ENCODE measurements at regions of chr13 and their contacts with region 1.

Region 1: GRCh38 chr13:19863323-19864023 is at the start of gene ZMYM5:
- DNase-seq: peak; percentile 98 to 100
- H3K4me3 ChIP-seq: peak within 1 kb of the TSS; percentile 96 to 97
- H3K27ac ChIP-seq: peak within 1 kb of the TSS; percentile 98 to 99
- H3K4me1 ChIP-seq: peaks cover 0 to 29% (median 19%) of the 10 kb centered on the region in 4 donors
- H3K27me3 ChIP-seq: no peaks in the 10 kb centered on the region
- CTCF ChIP-seq: peak in 1 of 2 experiments; percentile 7

Region 2: DNA sequence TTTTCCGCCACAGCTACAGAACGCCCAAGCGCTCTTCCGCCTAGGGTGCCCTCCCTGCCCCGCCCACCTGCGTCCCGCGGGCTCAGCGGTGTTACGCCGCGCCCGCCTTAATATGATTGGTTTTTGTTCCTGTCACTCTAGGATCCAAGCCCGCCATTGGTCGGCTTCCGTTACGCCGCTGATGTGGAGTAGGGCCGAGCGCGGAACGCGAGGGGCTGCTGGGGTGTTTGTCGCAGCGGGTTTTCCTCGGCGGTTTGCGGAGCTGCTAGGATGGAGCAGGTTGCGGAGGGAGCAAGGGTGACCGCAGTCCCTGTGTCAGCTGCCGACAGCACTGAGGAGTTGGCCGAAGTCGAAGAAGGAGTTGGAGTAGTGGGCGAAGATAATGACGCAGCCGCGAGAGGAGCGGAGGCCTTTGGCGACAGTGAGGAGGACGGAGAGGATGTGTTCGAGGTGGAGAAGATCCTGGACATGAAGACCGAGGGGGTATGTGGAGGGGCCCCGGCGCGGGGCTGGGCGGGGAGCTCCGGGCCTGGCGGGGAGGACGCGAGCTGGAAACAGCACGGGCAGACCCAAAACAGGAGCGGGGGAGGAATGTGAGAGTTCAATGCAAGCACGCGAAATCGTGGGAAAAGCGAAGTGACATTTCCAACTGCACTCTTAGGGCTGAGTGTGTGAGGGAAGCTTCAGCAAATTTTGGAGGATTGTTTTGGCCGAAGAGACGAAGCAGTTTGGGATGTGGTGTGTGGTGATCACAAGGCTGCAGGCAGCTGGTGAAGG is 229.8 kb before region 1 on chr13 and contains the start of gene MPHOSPH8:
- intact Hi-C with region 1: loop called (anchors 2 kb)
- DNase-seq: peak; percentile 94 to 97
- H3K4me3 ChIP-seq: peak within 1 kb of the TSS; percentile 78 to 80
- H3K27ac ChIP-seq: peak within 1 kb of the TSS; percentile 92 to 94
- H3K4me1 ChIP-seq: peaks cover 0 to 31% (median 23%) of the 10 kb centered on the region in 4 donors
- H3K27me3 ChIP-seq: no peaks in the 10 kb centered on the region
- CTCF ChIP-seq: no peak

Region 3: DNA sequence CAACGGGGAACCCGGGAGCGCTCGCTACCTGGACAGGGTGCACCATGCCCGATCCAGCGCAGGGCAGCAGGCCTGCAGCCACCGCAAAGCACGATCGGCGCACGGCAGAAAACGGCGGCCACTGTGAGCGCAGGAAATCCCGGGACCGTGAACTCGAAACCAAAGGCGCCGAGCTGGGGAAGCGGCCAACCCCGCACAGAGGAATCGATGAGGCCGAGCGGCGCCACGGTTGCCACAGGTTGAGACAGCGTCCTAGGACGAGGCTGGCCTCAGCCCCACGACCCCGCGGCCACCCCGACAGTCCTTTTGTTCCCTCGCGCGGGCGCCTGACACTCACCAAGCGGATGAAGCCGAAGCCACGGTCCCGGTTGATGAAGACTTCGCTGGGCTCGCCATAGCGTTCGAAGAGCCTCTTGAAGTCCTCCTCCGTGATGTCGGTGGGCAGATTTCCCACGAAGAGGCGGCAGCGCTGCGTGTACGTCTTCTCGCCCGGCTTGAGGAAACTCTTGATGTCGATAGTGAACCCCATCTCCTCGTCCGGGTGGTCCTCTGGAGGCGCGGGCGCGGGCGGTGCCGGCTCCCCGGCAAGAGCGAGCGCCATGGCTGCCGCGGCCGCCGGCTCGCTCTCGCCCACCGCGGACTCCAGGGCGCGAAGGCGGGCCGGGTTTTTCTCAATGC is 81.3 kb before region 1 on chr13:
- intact Hi-C with region 1: loop called (anchors 2 kb)
- DNase-seq: peak; percentile 50 to 75
- H3K4me3 ChIP-seq: peak overlapping the region; percentile 87 to 95
- H3K27ac ChIP-seq: peak overlapping the region; percentile 97
- H3K4me1 ChIP-seq: peaks cover 0 to 13% (median 4%) of the 10 kb centered on the region in 4 donors
- H3K27me3 ChIP-seq: no peaks in the 10 kb centered on the region
- CTCF ChIP-seq: no peak

Region 4: GRCh38 chr13:19959831-19960652 is 96.6 kb after region 1 on chr13:
- intact Hi-C with region 1: loop called (anchors 2 kb)
- DNase-seq: peak; percentile 88 to 92
- H3K4me3 ChIP-seq: peak overlapping the region; percentile 93 to 94
- H3K27ac ChIP-seq: peak overlapping the region; percentile 96 to 99
- H3K4me1 ChIP-seq: peaks cover 0 to 51% (median 25%) of the 10 kb centered on the region in 4 donors
- H3K27me3 ChIP-seq: no peaks in the 10 kb centered on the region
- CTCF ChIP-seq: peak; percentile 88 to 97

Measured in tibial artery (tissue), 4 donors.